K562 (cell line): ENCODE measurements at regions of chr7 and their contacts with region 1.

Region 1: DNA sequence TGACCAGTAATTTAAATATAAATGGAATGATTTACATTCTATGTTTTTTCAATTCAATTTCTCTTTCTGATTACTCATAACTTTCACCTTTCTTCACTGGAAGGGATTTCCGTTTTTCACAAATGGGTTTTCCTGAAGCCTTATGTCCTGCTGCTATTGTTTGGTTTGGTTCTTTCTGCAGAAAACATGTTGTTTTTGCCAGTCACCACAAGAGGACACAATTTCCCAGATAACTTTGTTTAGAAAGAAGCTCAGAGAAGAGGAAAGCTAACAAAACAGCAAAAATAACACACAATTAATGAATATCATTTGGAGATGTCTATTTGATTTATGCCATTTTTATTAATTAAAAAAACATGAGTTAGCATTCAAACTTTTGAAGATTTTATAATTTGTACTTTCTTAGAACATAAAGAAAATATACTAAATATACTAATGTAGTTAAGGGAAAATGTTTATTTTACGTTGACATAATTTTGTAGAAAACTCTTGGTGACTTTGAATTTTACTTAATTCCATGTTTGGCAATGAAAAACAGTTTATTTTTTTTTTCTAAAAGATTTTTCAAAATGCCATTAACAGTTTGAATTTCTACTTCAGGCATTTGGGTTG is 4.6 kb upstream of the TWIST1 start:
- DNase-seq: no peak
- ATAC-seq: no peak
- H3K4me3 ChIP-seq: no peak overlapping the region
- H3K27ac ChIP-seq: no peak overlapping the region
- H3K4me1 ChIP-seq: no peaks in the 10 kb centered on the region; a peak in 1 of 5 replicates
- H3K27me3 ChIP-seq: no peaks in the 10 kb centered on the region
- CTCF ChIP-seq: peak in 1 of 3 experiments; percentile 32; a peak in 1 of 6 replicates
- EP300 ChIP-seq: no peak
- POLR2A ChIP-seq: no peak
- RAD21 ChIP-seq: peak; percentile 51 to 55

Region 2: DNA sequence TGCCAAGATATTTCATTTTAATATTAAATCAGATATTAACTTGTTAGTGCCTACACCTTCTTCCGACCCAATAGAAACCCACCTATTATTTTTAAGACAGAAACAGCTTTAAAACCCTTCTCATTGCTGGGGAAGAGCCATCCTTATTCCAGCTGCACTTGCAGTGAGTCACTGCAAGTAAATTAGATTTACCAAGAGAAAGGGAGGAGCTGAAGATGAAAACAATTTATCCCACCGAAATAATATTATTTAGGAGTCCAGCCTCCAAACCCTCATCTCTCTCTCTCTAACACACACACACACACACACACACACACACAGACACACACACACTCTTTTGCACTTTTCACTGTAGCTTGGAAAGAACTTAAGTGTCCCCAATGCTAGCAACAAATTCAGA is 31.6 kb before region 1 on chr7:
- CTCF ChIA-PET with region 1: no interaction called
- POLR2A ChIA-PET with region 1: no interaction called
- in situ Hi-C with region 1: no loop called
- intact Hi-C with region 1: no loop called
- DNase-seq: no peak
- ATAC-seq: no peak
- H3K4me3 ChIP-seq: no peak overlapping the region
- H3K27ac ChIP-seq: no peak overlapping the region
- H3K4me1 ChIP-seq: no peaks in the 10 kb centered on the region
- H3K27me3 ChIP-seq: no peaks in the 10 kb centered on the region
- CTCF ChIP-seq: no peak
- EP300 ChIP-seq: no peak
- POLR2A ChIP-seq: no peak
- RAD21 ChIP-seq: no peak

Region 3: DNA sequence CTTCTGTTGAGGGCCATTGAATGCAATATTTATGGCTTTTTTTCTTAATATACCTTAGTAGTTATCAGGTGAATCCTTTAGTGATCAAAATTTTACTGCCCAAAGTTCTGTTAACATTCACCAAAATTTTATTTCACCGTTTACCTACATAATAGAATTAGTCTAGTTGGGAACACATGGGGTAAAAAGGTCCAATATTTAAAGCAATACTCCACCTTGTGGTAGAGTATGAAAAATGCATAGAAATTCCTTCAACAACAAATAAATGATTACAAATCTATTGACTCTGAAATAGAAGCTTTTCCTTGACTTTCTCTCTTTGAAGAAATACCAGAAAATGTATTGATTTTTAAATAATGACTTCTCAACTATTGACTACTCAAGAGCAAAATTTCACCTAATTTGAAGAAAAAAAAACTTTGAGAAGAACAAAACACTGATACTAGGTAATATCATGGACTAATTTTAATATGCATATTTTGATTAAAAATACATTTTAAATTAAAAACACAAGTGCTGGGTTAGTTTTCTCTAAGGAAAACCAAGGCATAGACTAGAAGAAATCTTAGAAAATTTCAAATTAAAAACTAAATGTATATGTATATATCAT is 543.4 kb after region 1 on chr7:
- CTCF ChIA-PET with region 1: no interaction called
- POLR2A ChIA-PET with region 1: no interaction called
- in situ Hi-C with region 1: no loop called
- intact Hi-C with region 1: loop called (anchors 5 kb)
- DNase-seq: peak; percentile 15 to 35 (median 28)
- ATAC-seq: peak; percentile 63; the same call in 1 of the 3 replicates
- H3K4me3 ChIP-seq: no peak overlapping the region
- H3K27ac ChIP-seq: no peak overlapping the region
- H3K4me1 ChIP-seq: no peaks in the 10 kb centered on the region; a peak in 1 of 5 replicates
- H3K27me3 ChIP-seq: no peaks in the 10 kb centered on the region
- CTCF ChIP-seq: peak; percentile 21 to 67 (median 32); a peak in 4 of 6 replicates
- EP300 ChIP-seq: no peak
- POLR2A ChIP-seq: no peak
- RAD21 ChIP-seq: peak; percentile 63 to 68